Left lung (tissue), 14 donors: ENCODE measurements at regions of chr2 and their contacts with region 1.

Region 1: DNA sequence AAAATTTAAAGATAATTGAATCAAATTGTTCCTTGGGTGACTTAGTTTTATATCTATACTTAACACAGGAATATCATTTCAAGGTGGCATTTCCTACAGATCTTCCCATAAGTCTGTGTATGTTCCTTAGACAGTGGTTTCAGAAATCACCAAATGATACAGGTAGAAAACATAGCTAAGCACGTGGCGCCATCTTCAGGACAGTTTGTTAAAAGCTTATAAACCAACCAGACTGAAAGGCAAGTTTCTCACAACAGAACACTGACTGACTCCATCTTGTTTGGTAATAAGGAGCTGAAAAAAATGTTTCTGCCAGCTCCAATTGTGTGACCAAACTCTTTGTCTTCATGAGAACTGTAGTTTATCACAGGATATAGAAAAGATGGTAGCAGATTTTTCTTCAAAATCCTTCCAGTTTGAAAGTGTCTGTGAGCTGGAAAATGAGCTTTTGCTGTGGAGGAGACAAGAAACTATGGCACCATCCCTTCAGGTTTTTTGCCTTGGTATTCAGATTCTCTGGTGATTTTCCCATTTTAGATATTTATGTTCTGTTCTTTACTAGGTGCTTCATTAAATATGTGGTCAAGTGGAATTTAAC is 34.8 kb upstream of the NEUROD1 start:
- DNase-seq: peak in 3 of 4 donors; percentile 35 to 76 (median 61)
- ATAC-seq: peak; percentile 91
- H3K4me3 ChIP-seq: no peak overlapping the region
- H3K27ac ChIP-seq: no peak overlapping the region
- H3K4me1 ChIP-seq: no peaks in the 10 kb centered on the region
- H3K27me3 ChIP-seq: no peaks in the 10 kb centered on the region
- CTCF ChIP-seq: peak; percentile 36 to 70

Region 2: GRCh38 chr2:181077128-181077709 is 637.9 kb before region 1 on chr2:
- intact Hi-C with region 1: loop called in 1 of 2 experiments (anchors 10 kb)
- DNase-seq: peak in 2 of 4 donors; percentile 27 to 52
- ATAC-seq: peak; percentile 77
- H3K4me3 ChIP-seq: no peak overlapping the region
- H3K27ac ChIP-seq: no peak overlapping the region
- H3K4me1 ChIP-seq: peaks cover 0 to 4% of the 10 kb centered on the region in 2 donors
- H3K27me3 ChIP-seq: no peaks in the 10 kb centered on the region
- CTCF ChIP-seq: peak; percentile 50 to 65

Region 3: DNA sequence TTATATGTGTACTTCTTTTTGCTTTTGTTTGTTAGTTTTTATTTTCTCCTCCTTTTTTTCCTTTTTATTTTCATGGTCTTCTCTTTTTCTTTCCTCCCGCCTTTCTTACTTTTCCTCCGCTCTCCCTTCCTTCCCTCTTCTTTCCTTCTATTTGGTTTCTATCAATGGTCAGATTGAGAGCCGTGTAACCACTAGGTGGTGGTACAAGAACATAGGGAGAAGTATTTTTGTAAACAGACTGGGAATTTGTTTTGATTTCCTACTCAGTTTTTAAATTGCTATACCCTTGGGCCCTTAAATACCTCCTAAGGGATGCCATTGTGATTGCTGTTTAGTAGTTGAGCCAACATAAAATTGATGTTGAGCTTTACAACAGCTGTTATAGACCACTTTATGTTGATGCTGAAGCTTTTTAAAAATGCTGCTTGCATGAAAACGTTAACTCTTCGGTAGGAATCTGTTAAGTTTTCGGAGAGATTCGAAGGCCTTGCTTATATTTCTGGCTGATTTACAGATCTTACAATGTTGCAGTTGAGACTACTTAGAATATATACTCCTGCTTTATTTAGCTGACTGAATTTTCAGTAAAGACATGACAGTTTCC is 610.5 kb before region 1 on chr2:
- intact Hi-C with region 1: loop called in 1 of 2 experiments (anchors 10 kb)
- DNase-seq: peak in 2 of 4 donors; percentile 31 to 56
- ATAC-seq: peak; percentile 57
- H3K4me3 ChIP-seq: no peak overlapping the region
- H3K27ac ChIP-seq: no peak overlapping the region
- H3K4me1 ChIP-seq: peaks cover 0 to 13% of the 10 kb centered on the region in 2 donors
- H3K27me3 ChIP-seq: no peaks in the 10 kb centered on the region
- CTCF ChIP-seq: peak; percentile 49 to 56

Region 4: DNA sequence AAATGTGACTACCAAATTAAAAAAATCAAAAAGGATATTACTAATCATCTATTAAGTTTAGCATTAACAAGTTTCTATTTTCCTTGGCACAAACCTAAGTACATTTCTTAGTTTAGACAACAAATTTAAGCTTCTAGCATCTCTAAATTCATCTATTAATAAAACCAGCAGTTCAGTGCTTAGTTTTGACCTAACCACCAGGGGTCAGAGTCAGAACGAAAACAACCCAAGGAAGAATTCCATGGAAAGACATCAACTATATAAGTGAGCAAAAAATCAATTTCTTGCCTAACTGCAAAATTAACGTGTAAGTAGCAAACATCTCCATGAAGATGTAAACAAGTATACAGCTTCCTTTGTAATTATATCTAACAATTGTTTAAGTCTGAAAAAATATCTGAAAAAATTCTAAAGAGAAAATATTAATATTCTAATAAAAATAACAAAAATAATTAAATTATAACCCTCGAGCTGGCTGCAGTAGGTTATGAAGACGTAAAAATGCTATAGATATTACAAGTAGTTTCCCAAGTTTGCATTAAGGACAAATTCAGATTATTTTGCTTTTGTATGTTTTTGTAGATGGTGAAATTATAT is 141.9 kb before region 1 on chr2:
- intact Hi-C with region 1: loop called in 1 of 2 experiments (anchors 10 kb)
- DNase-seq: peak in 2 of 4 donors; percentile 4 to 15
- ATAC-seq: no peak
- H3K4me3 ChIP-seq: no peak overlapping the region
- H3K27ac ChIP-seq: no peak overlapping the region
- H3K4me1 ChIP-seq: no peaks in the 10 kb centered on the region
- H3K27me3 ChIP-seq: peaks cover 0 to 4% of the 10 kb centered on the region in 2 donors
- CTCF ChIP-seq: peak in 1 of 2 donors; percentile 40

Region 5: DNA sequence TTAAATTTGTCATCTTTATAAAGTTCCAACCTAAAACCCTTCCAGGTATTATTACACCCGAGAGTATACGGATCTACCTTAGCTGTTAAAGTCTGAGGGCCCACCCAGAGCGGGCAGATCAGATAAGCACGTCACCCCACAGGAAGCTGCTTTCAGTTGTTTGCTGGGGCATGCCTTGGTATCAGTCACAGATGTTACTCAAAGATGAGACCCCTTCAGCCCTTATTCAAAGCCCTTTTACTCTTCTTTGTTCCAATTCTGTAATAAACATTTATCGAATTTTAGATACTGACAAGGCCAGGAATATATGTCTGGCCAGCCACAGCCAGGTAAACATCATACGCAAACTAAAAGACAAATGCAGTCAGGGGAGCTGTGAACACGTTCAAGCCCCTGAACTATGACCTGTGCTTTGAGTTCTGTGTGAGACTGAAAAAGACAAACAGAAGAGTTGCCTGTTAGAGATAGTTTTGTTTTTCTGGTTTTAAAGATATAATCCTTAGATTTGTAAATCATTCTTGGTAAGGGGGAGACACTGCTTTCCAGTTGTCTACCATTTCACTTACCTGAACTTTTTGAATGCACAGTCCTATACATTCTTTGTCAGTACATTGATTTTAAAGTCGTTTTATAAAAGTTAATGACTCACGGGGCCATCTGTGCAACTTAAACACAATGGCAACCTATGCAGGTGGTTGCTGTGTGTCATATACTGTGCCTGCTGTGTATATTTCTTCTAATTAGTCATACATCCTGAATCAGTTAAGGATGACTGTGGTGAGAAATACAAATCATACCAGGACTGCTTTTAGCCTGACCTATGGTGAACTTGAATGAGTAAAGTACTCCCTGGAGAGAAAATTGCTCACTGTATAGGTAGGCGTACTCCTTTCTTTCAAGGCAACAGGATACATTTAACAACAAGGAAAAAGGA is 75.9 kb after region 1 on chr2:
- intact Hi-C with region 1: no loop called
- DNase-seq: no peak
- ATAC-seq: peak; percentile 55
- H3K4me3 ChIP-seq: no peak overlapping the region
- H3K27ac ChIP-seq: no peak overlapping the region
- H3K4me1 ChIP-seq: no peaks in the 10 kb centered on the region
- H3K27me3 ChIP-seq: no peaks in the 10 kb centered on the region
- CTCF ChIP-seq: no peak